K562 (cell line): ENCODE measurements at regions of chr5 and their contacts with region 1.

Region 1: DNA sequence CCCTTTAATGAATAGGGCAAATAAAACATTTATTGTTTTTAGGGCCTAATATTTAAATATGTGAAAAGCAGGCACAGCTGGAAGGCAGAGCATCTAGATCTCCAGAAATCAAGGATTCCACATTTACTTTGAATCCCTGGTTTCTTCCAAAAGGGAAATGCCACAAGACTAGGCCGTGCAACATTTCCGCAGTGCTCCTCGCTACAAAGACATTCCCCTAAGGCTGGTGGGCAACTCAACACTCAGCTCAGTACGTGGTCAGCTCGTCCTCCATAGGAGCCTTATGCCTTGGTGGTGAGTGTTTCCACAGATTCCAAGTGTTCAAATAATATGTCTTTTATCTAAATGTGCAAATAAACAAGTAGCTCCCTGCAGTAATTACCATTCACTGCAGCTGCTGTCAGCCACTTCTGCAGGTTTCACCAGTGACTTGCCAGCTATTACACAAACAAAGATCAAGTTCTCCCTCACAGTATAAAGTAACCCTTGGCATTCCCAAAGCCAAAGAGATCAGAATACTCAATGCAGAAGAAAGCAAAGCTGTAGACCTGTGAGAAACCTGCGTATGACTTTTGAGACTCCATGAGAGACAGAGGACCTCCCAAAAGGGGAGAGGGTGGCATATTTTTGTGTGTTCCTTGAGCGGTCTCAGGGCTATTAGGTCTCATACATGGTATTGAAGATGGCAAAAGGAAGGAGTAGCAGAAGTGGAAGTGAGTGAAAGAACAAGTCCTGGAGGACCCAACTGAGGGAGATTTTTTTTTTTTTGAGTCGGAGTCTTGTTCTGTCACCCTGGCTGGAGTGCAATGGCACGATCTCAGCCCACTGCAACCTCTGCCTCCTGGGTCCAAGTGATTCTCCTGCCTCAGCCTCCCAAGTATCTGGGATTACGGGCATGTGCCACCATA is 38.0 kb upstream of the TENT2 start:
- DNase-seq: no peak
- ATAC-seq: no peak
- H3K4me3 ChIP-seq: no peak overlapping the region
- H3K27ac ChIP-seq: no peak overlapping the region
- H3K4me1 ChIP-seq: peaks cover 3 to 14% of the 10 kb centered on the region in 2 experiments; a peak in 4 of 5 replicates
- H3K27me3 ChIP-seq: no peaks in the 10 kb centered on the region
- CTCF ChIP-seq: no peak
- EP300 ChIP-seq: no peak
- POLR2A ChIP-seq: no peak
- RAD21 ChIP-seq: no peak

Region 2: DNA sequence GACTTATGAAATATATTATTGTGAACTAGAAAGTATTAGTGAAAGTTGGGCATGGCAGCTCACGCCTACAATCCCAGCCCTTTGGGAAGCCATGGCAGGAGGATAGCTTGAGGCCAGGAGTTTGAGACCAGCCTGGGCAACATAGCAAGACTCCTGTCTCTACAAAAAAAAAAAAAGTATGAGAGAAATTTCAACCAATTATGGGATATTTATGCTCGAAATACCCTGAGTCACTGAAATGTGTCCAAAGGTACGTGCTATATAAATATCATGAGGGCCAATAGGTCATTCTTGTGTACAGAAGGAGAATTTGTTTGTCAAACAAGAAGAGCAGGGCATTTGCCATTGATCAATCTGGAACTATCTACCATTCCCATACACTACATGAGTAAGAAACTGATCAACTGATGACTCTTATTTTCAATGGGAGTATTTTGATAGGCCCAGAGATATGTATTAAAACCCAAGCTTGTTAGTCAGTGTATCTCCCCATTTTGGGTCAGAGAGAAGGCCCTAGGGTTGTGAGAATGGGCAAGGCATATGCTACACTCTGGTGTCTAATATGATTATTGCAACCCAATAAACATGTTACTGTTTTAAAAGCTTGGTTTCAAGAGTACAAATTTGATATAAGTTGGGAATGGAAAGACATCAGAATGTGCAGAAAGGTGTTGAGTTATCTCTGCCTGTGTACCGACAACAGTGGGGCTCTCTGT is 38.6 kb before region 1 on chr5:
- CTCF ChIA-PET with region 1: no interaction called
- POLR2A ChIA-PET with region 1: no interaction called
- in situ Hi-C with region 1: no loop called
- intact Hi-C with region 1: no loop called
- DNase-seq: no peak
- ATAC-seq: peak; percentile 64; the same call in 2 of the 3 replicates
- H3K4me3 ChIP-seq: no peak overlapping the region
- H3K27ac ChIP-seq: no peak overlapping the region
- H3K4me1 ChIP-seq: no peaks in the 10 kb centered on the region
- H3K27me3 ChIP-seq: no peaks in the 10 kb centered on the region
- CTCF ChIP-seq: peak in 2 of 3 experiments; percentile 19 to 33; a peak in 2 of 6 replicates
- EP300 ChIP-seq: no peak
- POLR2A ChIP-seq: no peak
- RAD21 ChIP-seq: peak in 1 of 2 experiments; percentile 54; a peak in 2 of 4 replicates

Region 3: GRCh38 chr5:79743846-79744605 is 169.8 kb after region 1 on chr5:
- CTCF ChIA-PET with region 1: no interaction called
- POLR2A ChIA-PET with region 1: no interaction called
- in situ Hi-C with region 1: no loop called
- intact Hi-C with region 1: no loop called
- DNase-seq: no peak
- ATAC-seq: no peak
- H3K4me3 ChIP-seq: no peak overlapping the region
- H3K27ac ChIP-seq: no peak overlapping the region
- H3K4me1 ChIP-seq: no peaks in the 10 kb centered on the region
- H3K27me3 ChIP-seq: peaks cover 5 to 13% of the 10 kb centered on the region in 2 experiments; a peak in 4 of 5 replicates
- CTCF ChIP-seq: no peak
- EP300 ChIP-seq: no peak
- POLR2A ChIP-seq: no peak
- RAD21 ChIP-seq: no peak

Region 4: DNA sequence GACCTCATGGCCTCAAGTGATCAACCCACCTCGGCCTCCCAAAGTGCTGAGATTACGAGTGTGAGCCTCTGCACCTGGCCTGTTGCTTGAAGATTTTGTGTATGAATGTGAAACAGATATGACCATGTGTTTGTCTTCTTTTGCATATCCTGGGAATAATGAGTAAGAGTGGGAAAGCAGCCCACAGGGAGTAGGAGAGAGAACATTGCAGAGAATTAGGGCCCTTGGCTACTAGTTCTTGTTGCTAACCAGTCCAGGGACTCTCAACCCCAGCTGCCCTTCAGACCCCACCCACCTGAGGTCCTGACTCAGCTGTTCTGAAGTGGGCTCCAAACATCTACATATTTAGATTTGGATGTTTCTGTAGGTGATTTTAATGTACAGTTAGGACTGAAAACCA is 291.3 kb after region 1 on chr5:
- CTCF ChIA-PET with region 1: no interaction called
- POLR2A ChIA-PET with region 1: no interaction called
- in situ Hi-C with region 1: loop called (anchors 10 kb)
- intact Hi-C with region 1: no loop called
- DNase-seq: no peak
- ATAC-seq: no peak
- H3K4me3 ChIP-seq: no peak overlapping the region
- H3K27ac ChIP-seq: no peak overlapping the region
- H3K4me1 ChIP-seq: no peaks in the 10 kb centered on the region
- H3K27me3 ChIP-seq: peaks cover 20 to 38% of the 10 kb centered on the region in 2 experiments
- CTCF ChIP-seq: no peak
- EP300 ChIP-seq: no peak
- POLR2A ChIP-seq: no peak
- RAD21 ChIP-seq: no peak